ENCODE measurements at regions of chr7 and their contacts with region 1.

Region 1: GRCh38 chr7:151104411-151105235 is 18.3 kb downstream of the AGAP3 start:
- DNase-seq: no peak
- H3K4me3 ChIP-seq: no peak overlapping the region
- H3K27ac ChIP-seq: no peak overlapping the region
- H3K4me1 ChIP-seq: no peaks in the 10 kb centered on the region
- H3K27me3 ChIP-seq: no peaks in the 10 kb centered on the region
- CTCF ChIP-seq: no peak

Region 2: GRCh38 chr7:151010307-151011096 is 94.1 kb before region 1 on chr7:
- CTCF ChIA-PET with region 1: no interaction called
- POLR2A ChIA-PET with region 1: interaction called, 27 read pairs
- intact Hi-C with region 1: no loop called
- DNase-seq: peak in 1 of 2 experiments; percentile 27
- H3K4me3 ChIP-seq: no peak overlapping the region
- H3K27ac ChIP-seq: no peak overlapping the region
- H3K4me1 ChIP-seq: peaks cover 26% of the 10 kb centered on the region
- H3K27me3 ChIP-seq: no peaks in the 10 kb centered on the region
- CTCF ChIP-seq: no peak

Region 3: GRCh38 chr7:151542606-151543130 is 438.0 kb after region 1 on chr7:
- CTCF ChIA-PET with region 1: interaction called, 23 read pairs
- POLR2A ChIA-PET with region 1: no interaction called
- intact Hi-C with region 1: no loop called
- DNase-seq: no peak
- H3K4me3 ChIP-seq: no peak overlapping the region
- H3K27ac ChIP-seq: no peak overlapping the region
- H3K4me1 ChIP-seq: no peaks in the 10 kb centered on the region
- H3K27me3 ChIP-seq: no peaks in the 10 kb centered on the region
- CTCF ChIP-seq: no peak

Measured in PC-9 (cell line).